HCT116 (cell line): ENCODE measurements at regions of chr17 and their contacts with region 1.

Region 1: DNA sequence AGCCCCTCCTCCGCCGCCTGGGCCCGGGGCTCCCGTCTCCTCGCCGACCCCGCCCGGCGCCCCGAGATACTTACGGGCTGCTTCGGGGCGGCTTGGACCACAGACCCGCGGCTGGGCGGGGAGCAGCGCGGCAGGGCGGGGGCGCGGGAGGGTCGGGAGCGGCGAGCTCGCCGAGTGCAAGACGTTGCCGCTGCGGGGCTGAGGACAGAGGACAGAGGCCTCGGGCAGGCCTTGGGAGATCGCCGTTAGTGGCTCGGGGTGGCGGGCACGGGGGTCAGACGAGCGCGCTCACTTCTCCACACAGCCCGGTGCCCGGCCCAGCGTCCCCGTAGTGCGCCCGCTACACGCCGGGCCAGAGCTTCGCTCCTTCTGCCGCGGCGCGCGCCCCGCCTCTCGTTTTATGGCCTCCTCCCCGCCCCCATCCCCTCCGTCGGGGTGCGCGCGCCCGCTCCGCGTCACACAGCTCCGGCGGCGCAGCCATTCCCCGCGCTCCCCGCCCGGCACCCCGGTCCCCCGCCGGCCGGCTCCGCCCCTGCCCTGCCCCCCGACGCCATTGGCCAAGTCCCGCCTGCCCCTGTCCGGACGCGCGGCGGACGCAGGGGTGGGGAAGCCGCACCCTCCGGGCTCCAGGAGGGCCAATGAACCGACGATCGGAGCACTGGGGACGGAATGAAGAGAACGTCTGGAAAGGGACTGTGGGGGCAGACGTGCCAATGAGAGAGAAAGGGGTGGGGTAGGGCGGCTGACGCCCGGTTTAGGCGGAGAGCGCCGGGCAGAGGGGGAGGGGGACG is at the start of gene TOB1:
- DNase-seq: peak; percentile 96
- ATAC-seq: peak; percentile 81
- H3K4me3 ChIP-seq: peak within 1 kb of the TSS; percentile 70 to 83
- H3K27ac ChIP-seq: peak within 1 kb of the TSS; percentile 92
- H3K4me1 ChIP-seq: peaks cover 17 to 36% of the 10 kb centered on the region in 2 experiments
- H3K27me3 ChIP-seq: no peaks in the 10 kb centered on the region
- CTCF ChIP-seq: no peak
- POLR2A ChIP-seq: peak; percentile 99
- RAD21 ChIP-seq: no peak
- total RNA-seq, gene TOB1: 86.0 TPM

Region 2: GRCh38 chr17:50806141-50806643 is 60.0 kb before region 1 on chr17:
- CTCF ChIA-PET with region 1: no interaction called
- POLR2A ChIA-PET with region 1: no interaction called
- RAD21 ChIA-PET with region 1: no interaction called
- intact Hi-C with region 1: no loop called
- DNase-seq: no peak
- ATAC-seq: peak; percentile 67
- H3K4me3 ChIP-seq: no peak overlapping the region
- H3K27ac ChIP-seq: no peak overlapping the region
- H3K4me1 ChIP-seq: peaks cover 0 to 14% of the 10 kb centered on the region in 2 experiments; a peak in 2 of 4 replicates
- H3K27me3 ChIP-seq: no peaks in the 10 kb centered on the region
- CTCF ChIP-seq: peak in 2 of 3 experiments; percentile 51 to 53; a peak in 4 of 6 replicates
- POLR2A ChIP-seq: no peak
- RAD21 ChIP-seq: no peak

Region 3: DNA sequence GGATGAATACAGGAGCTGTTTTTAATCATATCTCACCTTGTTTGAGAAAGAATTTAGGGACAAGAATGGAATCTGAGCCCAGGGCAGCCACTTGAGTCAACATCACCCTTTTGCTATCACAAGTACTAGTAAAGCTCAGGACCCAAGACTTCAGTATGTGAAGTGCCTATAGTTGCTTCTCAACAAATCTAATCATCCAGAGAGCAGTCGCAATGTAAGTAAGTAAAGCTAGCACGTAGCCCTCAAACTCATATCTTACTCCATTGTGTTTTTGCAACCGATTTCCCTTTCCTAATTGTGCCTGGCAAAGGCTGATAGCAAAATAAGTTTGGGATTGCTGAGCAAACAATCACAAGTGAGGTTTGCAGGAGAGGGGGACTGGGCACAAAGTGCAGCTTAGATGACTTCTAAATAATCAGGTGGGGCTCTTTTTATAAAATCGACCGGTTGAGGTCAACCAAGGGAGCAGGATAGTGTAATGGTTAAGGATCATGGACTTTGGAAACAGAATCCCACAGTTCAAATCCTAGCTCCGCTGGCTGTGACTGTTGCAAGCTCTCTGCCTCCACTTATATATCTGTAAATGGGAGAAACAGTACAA is 13.1 kb before region 1 on chr17:
- CTCF ChIA-PET with region 1: interaction called, 51 read pairs
- POLR2A ChIA-PET with region 1: interaction called, 72 read pairs
- RAD21 ChIA-PET with region 1: interaction called in 1 of 2 experiments, 4 read pairs
- intact Hi-C with region 1: no loop called
- DNase-seq: no peak
- ATAC-seq: no peak
- H3K4me3 ChIP-seq: no peak overlapping the region
- H3K27ac ChIP-seq: no peak overlapping the region
- H3K4me1 ChIP-seq: peaks cover 5 to 11% of the 10 kb centered on the region in 2 experiments
- H3K27me3 ChIP-seq: no peaks in the 10 kb centered on the region
- CTCF ChIP-seq: no peak
- POLR2A ChIP-seq: no peak
- RAD21 ChIP-seq: no peak

Region 4: GRCh38 chr17:50904521-50905459 is 38.6 kb after region 1 on chr17:
- CTCF ChIA-PET with region 1: interaction called, 3 read pairs
- POLR2A ChIA-PET with region 1: interaction called, 28 read pairs
- RAD21 ChIA-PET with region 1: no interaction called
- intact Hi-C with region 1: no loop called
- DNase-seq: no peak
- ATAC-seq: peak; percentile 35
- H3K4me3 ChIP-seq: no peak overlapping the region
- H3K27ac ChIP-seq: peak overlapping the region; percentile 4; the same call in 1 of the 2 replicates
- H3K4me1 ChIP-seq: peaks cover 24 to 29% of the 10 kb centered on the region in 2 experiments
- H3K27me3 ChIP-seq: no peaks in the 10 kb centered on the region
- CTCF ChIP-seq: no peak
- POLR2A ChIP-seq: no peak
- RAD21 ChIP-seq: no peak

Region 5: GRCh38 chr17:50944054-50944901 is 78.1 kb after region 1 on chr17:
- CTCF ChIA-PET with region 1: interaction called, 13 read pairs
- POLR2A ChIA-PET with region 1: interaction called, 78 read pairs
- RAD21 ChIA-PET with region 1: interaction called, 4 to 5 read pairs
- intact Hi-C with region 1: no loop called
- DNase-seq: no peak
- ATAC-seq: peak; percentile 83
- H3K4me3 ChIP-seq: peak overlapping the region; percentile 40 to 52
- H3K27ac ChIP-seq: peak overlapping the region; percentile 61; the same call in 1 of the 2 replicates
- H3K4me1 ChIP-seq: peaks cover 47 to 73% of the 10 kb centered on the region in 2 experiments
- H3K27me3 ChIP-seq: no peaks in the 10 kb centered on the region
- CTCF ChIP-seq: no peak
- POLR2A ChIP-seq: peak; percentile 32
- RAD21 ChIP-seq: no peak

Region 6: GRCh38 chr17:51035431-51035830 is 169.3 kb after region 1 on chr17:
- CTCF ChIA-PET with region 1: no interaction called
- POLR2A ChIA-PET with region 1: no interaction called
- RAD21 ChIA-PET with region 1: no interaction called
- intact Hi-C with region 1: no loop called
- DNase-seq: no peak
- ATAC-seq: no peak
- H3K4me3 ChIP-seq: no peak overlapping the region
- H3K27ac ChIP-seq: no peak overlapping the region
- H3K4me1 ChIP-seq: no peaks in the 10 kb centered on the region
- H3K27me3 ChIP-seq: no peaks in the 10 kb centered on the region
- CTCF ChIP-seq: no peak
- POLR2A ChIP-seq: no peak
- RAD21 ChIP-seq: no peak

Region 7: GRCh38 chr17:51120739-51121617 is 254.8 kb after region 1 on chr17 and contains the start of gene SPAG9:
- CTCF ChIA-PET with region 1: no interaction called
- POLR2A ChIA-PET with region 1: interaction called, 7 read pairs
- RAD21 ChIA-PET with region 1: no interaction called
- intact Hi-C with region 1: loop called (anchors 2 kb)
- DNase-seq: peak; percentile 95
- ATAC-seq: peak; percentile 79
- H3K4me3 ChIP-seq: peak within 1 kb of the TSS; percentile 91 to 92
- H3K27ac ChIP-seq: peak within 1 kb of the TSS; percentile 87
- H3K4me1 ChIP-seq: peaks cover 39 to 54% of the 10 kb centered on the region in 2 experiments
- H3K27me3 ChIP-seq: no peaks in the 10 kb centered on the region
- CTCF ChIP-seq: no peak
- POLR2A ChIP-seq: peak; percentile 45
- RAD21 ChIP-seq: 0 out of 2 replicates have a peak, but pooled peaks have one; percentile 13
- total RNA-seq, gene SPAG9: 77.6 TPM